Mammary epithelial cell (primary cell): ENCODE measurements at regions of chr2 and their contacts with region 1.

Region 1: GRCh38 chr2:120559401-120559800 is 176.3 kb upstream of the GLI2 start:
- DNase-seq: peak; percentile 90
- H3K4me3 ChIP-seq: no peak overlapping the region
- H3K27ac ChIP-seq: no peak overlapping the region
- H3K4me1 ChIP-seq: no peaks in the 10 kb centered on the region
- H3K27me3 ChIP-seq: no peaks in the 10 kb centered on the region
- CTCF ChIP-seq: no peak

Region 2: DNA sequence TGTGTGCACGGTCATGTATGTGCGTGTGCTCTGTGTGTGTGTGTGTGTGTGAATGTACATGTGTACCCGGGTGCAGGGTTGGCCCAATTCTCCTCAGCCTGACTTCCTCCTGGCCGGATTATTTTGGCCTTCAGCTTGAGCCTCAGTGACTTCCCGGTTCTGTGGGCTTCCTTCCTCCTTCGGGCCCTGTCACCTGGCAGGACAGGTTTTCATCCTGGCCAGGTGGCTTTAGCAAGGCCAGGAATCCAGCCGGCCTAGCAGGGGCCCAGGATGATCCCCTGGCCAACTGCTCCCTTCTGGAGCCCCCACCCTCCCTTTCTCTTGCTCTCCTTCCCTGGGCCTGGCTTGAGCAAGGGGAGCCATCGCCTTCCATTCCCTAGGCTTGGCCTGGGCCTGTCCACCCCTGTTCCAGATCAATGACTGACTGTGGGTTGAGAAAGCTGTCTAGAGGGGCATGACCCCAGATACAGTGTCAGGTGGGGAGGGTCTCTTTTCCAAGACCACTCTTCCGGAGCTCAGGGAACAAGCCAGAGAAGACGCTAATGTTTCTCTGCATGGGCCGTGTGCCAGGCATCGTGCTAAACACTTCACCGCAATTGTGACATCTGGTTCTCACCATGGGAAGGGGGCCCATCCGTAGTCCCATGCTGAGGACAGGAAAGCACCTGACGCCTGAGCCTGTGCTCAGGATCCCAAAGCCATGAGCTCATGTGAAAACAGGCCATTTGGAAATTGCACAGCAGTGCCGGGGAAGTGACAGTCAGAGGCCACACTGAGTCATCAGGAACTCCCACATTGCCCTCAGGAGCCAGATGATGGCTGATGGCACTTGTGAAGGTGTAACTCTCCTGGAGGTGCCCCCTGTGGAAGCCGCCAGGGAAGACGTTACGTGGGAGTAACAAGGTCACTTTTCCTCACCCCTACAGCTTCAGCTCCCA is 72.7 kb before region 1 on chr2:
- CTCF ChIA-PET with region 1: no interaction called
- dilution Hi-C with region 1: loop called (anchors 5 kb)
- in situ Hi-C with region 1: no loop called
- intact Hi-C with region 1: no loop called
- DNase-seq: no peak
- H3K4me3 ChIP-seq: no peak overlapping the region
- H3K27ac ChIP-seq: no peak overlapping the region
- H3K4me1 ChIP-seq: peaks cover 3% of the 10 kb centered on the region
- H3K27me3 ChIP-seq: no peaks in the 10 kb centered on the region
- CTCF ChIP-seq: no peak

Region 3: GRCh38 chr2:120520929-120521912 is 38.2 kb before region 1 on chr2:
- CTCF ChIA-PET with region 1: no interaction called
- dilution Hi-C with region 1: no loop called
- in situ Hi-C with region 1: no loop called
- intact Hi-C with region 1: no loop called
- DNase-seq: peak; percentile 24
- H3K4me3 ChIP-seq: no peak overlapping the region
- H3K27ac ChIP-seq: no peak overlapping the region
- H3K4me1 ChIP-seq: no peaks in the 10 kb centered on the region
- H3K27me3 ChIP-seq: no peaks in the 10 kb centered on the region
- CTCF ChIP-seq: peak; percentile 89 to 98